Caco-2 (cell line): ENCODE measurements at regions of chr9 and their contacts with region 1.

Region 1: DNA sequence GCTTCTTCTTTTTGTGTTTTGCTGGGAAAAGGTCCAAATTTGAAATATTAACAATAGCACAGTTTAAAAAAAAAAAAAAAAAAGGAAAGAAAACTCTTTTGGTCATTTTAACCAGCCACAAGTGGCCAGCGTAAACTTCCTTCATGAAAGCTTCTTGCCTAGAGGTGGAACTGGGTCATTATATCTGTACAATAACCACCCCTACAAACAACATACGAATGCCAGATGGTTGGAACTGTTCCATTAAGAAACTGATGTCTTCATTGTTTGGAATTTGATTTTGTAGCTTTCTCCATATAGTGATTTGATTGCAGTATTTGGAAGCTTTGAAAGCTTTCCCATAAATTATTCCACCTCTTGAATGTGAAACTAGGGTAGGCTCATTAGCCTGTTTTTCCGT is 18.3 kb upstream of the LPAR1 start:
- DNase-seq: no peak
- H3K4me3 ChIP-seq: no peak overlapping the region
- H3K4me3 Mint-ChIP-seq: no peak overlapping the region
- H3K27ac Mint-ChIP-seq: no peak overlapping the region
- H3K4me1 ChIP-seq: no peaks in the 10 kb centered on the region
- H3K4me1 Mint-ChIP-seq: no peaks in the 10 kb centered on the region
- H3K27me3 ChIP-seq: no peaks in the 10 kb centered on the region
- H3K27me3 Mint-ChIP-seq: peaks cover 10% of the 10 kb centered on the region
- CTCF ChIP-seq: no peak

Region 2: GRCh38 chr9:111605041-111605559 is 548.6 kb after region 1 on chr9:
- CTCF ChIA-PET with region 1: interaction called, 12 read pairs
- POLR2A ChIA-PET with region 1: no interaction called
- intact Hi-C with region 1: no loop called
- DNase-seq: peak; percentile 6 to 43
- H3K4me3 ChIP-seq: no peak overlapping the region
- H3K4me3 Mint-ChIP-seq: no peak overlapping the region
- H3K27ac Mint-ChIP-seq: no peak overlapping the region
- H3K4me1 ChIP-seq: peaks cover 32% of the 10 kb centered on the region
- H3K4me1 Mint-ChIP-seq: peaks cover 21% of the 10 kb centered on the region
- H3K27me3 ChIP-seq: no peaks in the 10 kb centered on the region
- H3K27me3 Mint-ChIP-seq: no peaks in the 10 kb centered on the region
- CTCF ChIP-seq: no peak